ENCODE measurements at regions of chr3 and their contacts with region 1.

Region 1: DNA sequence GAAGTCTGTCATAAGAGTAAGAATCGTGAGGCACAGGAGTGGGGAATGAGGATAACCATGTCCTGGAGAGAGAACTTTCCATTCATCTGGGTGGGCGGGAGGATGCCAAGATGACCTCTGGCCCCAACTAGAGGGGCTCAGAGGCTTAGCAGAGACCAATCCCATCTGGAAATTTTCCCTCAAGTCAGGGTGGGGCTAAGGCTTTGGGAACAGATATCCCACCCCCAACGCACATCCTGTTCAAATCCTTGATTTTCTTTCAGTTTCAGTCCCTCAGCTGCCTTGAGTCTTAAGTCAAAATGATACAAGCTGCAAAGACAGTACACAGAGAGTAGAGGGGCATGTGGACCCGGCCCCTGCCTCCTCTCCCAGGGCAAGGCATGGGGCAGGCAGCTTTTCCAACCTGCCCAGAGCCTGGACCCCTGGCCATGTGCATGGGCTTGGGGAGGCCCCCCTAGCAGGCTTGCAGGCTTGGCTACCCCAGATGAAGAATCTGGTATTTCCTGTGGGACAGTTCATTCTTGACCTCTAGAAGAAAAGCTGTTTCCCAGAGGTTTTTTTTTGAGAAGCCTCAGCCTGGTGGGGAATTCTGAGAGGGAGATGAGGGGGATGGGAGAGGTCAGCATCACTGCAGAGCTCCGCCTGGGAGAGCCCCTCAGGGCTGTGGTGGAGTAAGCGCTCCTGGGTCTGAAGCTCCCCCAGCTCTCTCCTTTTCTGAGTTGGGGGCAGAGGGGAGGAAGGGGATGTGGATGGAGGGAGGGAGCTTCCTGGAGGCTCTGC is 109.7 kb upstream of the HACD2 start:
- DNase-seq: no peak
- H3K4me3 ChIP-seq: no peak overlapping the region
- H3K27ac ChIP-seq: no peak overlapping the region
- H3K4me1 ChIP-seq: peaks cover 0 to 7% (median 2%) of the 10 kb centered on the region in 4 experiments; a peak in 3 of 7 replicates
- H3K27me3 ChIP-seq: no peaks in the 10 kb centered on the region; a peak in 1 of 7 replicates
- CTCF ChIP-seq: no peak
- EP300 ChIP-seq: no peak
- POLR2A ChIP-seq: no peak
- RAD21 ChIP-seq: no peak

Region 2: GRCh38 chr3:123679712-123680386 is 14.7 kb before region 1 on chr3:
- CTCF ChIA-PET with region 1: interaction called, 52 read pairs
- POLR2A ChIA-PET with region 1: interaction called, 4 read pairs
- DNase-seq: no peak
- H3K4me3 ChIP-seq: no peak overlapping the region
- H3K27ac ChIP-seq: no peak overlapping the region
- H3K4me1 ChIP-seq: peaks cover 0 to 7% (median 1%) of the 10 kb centered on the region in 4 experiments; a peak in 1 of 7 replicates
- H3K27me3 ChIP-seq: no peaks in the 10 kb centered on the region
- CTCF ChIP-seq: no peak
- EP300 ChIP-seq: no peak
- POLR2A ChIP-seq: no peak
- RAD21 ChIP-seq: no peak

Region 3: GRCh38 chr3:123706871-123707270 is 12.3 kb after region 1 on chr3:
- CTCF ChIA-PET with region 1: interaction called, 14 read pairs
- POLR2A ChIA-PET with region 1: interaction called, 5 read pairs
- DNase-seq: no peak
- H3K4me3 ChIP-seq: no peak overlapping the region
- H3K27ac ChIP-seq: no peak overlapping the region
- H3K4me1 ChIP-seq: peaks cover 0 to under 1% (median under 1%) of the 10 kb centered on the region in 4 experiments; a peak in 2 of 7 replicates
- H3K27me3 ChIP-seq: no peaks in the 10 kb centered on the region
- CTCF ChIP-seq: no peak
- EP300 ChIP-seq: no peak
- POLR2A ChIP-seq: no peak
- RAD21 ChIP-seq: no peak

Region 4: DNA sequence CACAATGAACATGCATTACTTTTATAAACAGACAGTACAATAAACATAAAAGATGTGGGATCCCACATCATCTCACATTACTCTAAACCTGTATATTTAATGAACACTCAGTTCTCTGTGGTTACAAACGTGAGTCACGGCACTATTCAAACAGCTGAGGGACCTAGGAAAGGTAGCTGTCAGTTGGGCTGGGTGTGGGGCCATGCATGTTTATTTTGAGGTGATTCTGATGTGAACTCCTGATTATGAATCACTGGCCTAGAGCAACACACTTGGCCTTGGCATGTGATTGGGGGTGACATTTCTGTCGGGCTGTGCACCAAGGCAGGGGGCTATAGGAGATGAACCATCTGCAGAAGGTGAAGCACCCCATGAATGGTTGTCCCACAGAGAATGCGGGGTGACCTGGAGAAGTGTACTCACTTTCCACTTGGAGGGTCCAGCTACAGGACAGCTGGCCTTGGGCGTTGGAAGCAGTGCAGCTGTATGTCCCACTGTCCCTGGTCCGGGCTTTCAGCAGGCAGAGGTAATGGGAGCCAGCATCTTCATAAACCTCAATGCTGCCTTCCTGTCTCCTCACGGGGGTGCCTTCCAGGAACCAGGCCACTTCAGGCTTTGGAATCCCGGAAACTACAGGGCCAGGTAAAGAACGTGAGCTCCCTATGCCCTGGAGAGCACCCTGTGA is 38.1 kb after region 1 on chr3:
- CTCF ChIA-PET with region 1: no interaction called
- POLR2A ChIA-PET with region 1: no interaction called
- DNase-seq: no peak
- H3K4me3 ChIP-seq: no peak overlapping the region
- H3K27ac ChIP-seq: no peak overlapping the region
- H3K4me1 ChIP-seq: no peaks in the 10 kb centered on the region
- H3K27me3 ChIP-seq: no peaks in the 10 kb centered on the region
- CTCF ChIP-seq: no peak
- EP300 ChIP-seq: no peak
- POLR2A ChIP-seq: no peak
- RAD21 ChIP-seq: no peak

Region 5: DNA sequence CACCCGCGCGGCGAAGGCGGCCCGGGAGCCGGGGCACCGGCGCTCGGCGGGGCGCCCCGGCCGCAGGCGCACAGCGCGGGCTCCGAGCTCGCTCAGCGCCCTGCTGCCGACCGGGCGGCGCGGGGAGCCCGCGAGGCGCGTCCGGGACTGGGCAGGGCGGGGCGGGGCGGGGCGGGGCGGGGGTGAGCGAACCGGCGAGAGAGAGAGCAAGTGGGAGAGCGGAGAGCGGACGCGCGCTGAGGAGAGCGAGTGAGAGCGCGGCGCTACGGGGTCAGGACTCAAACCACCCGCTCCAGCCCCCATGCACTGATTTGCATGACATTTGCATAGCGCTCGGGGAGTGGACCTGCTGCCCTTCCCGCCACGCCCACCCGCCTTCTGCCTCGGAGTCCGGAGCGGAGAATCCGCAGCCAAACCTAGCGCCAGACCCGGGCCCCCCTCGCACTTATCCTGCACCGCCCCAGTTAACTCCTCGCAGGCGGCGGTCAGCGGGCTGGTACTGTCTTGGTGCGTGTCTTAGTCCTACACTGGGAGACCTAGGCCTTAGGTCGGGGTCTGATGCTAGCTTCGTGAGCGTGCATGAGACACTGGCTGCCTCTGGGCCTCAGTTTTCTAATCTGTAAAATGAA is 189.8 kb after region 1 on chr3 and contains the start of gene MYLK:
- CTCF ChIA-PET with region 1: no interaction called
- POLR2A ChIA-PET with region 1: no interaction called
- DNase-seq: peak; percentile 87
- H3K4me3 ChIP-seq: peak within 1 kb of the TSS; percentile 65 to 89 (median 82)
- H3K27ac ChIP-seq: no peak within 1 kb of the TSS
- H3K4me1 ChIP-seq: peaks cover 0 to 6% (median 3%) of the 10 kb centered on the region in 4 experiments; a peak in 4 of 7 replicates
- H3K27me3 ChIP-seq: peaks cover 0 to 9% (median 4%) of the 10 kb centered on the region in 4 experiments; a peak in 3 of 7 replicates
- CTCF ChIP-seq: no peak
- EP300 ChIP-seq: no peak
- POLR2A ChIP-seq: peak in 1 of 2 experiments; percentile 65; a peak in 2 of 3 replicates
- RAD21 ChIP-seq: no peak
- total RNA-seq, gene MYLK: 15.5 and 21.3 TPM in 2 replicates

Measured in H1 (cell line).